Activated CD4-positive, alpha-beta T cell treated with anti-CD3 and anti-CD28 coated beads for 36 hours (primary cell): ENCODE measurements at regions of chr12 and their contacts with region 1.

Region 1: GRCh38 chr12:737122-737739 is 15.1 kb upstream of the WNK1 start:
- DNase-seq: no peak
- ATAC-seq: no peak
- H3K4me3 Mint-ChIP-seq: no peak overlapping the region
- H3K27ac Mint-ChIP-seq: no peak overlapping the region
- H3K4me1 Mint-ChIP-seq: peaks cover 10% of the 10 kb centered on the region
- H3K27me3 Mint-ChIP-seq: peaks cover 2% of the 10 kb centered on the region

Region 2: DNA sequence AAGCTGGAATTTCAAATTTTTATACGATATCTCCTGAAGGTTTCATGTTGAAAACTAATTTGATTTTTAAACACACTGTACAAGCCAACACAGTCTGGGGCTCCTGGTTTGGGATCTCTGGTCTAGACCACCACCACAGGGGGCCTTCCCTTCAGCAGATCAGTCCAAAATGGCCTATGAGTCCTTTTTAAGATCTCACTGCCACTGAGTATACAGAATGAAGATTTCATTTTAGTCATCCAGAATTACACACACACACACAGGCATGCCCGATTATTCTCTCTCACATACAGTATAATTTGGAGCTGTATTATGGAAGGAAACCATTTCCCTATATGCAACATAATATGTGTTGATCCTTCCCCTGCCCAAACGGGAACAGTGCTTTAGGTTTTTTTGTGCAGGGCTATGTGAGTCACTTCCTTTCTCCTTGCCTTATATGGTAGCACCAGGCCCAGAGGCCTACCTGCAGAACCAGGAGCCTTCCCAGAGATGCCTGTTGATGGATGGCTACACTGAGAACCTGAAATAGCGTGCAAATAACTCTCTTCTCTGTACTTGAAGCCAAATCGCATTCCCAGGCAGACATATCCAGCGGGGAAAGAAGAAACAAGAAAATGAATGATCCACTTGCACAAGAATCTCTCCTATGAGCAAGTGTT is 12.9 kb before region 1 on chr12:
- CTCF ChIA-PET with region 1: interaction called, 4 read pairs
- POLR2A ChIA-PET with region 1: interaction called, 3 read pairs
- intact Hi-C with region 1: loop called in 1 of 2 experiments (anchors 2 kb)
- DNase-seq: peak; percentile 37
- ATAC-seq: peak; percentile 65
- H3K4me3 Mint-ChIP-seq: peak overlapping the region; percentile 3
- H3K27ac Mint-ChIP-seq: peak overlapping the region; percentile 87
- H3K4me1 Mint-ChIP-seq: peaks cover 85% of the 10 kb centered on the region
- H3K27me3 Mint-ChIP-seq: no peaks in the 10 kb centered on the region